Heart left ventricle (tissue), 16 donors: ENCODE measurements at regions of chr5 and their contacts with region 1.

Region 1: DNA sequence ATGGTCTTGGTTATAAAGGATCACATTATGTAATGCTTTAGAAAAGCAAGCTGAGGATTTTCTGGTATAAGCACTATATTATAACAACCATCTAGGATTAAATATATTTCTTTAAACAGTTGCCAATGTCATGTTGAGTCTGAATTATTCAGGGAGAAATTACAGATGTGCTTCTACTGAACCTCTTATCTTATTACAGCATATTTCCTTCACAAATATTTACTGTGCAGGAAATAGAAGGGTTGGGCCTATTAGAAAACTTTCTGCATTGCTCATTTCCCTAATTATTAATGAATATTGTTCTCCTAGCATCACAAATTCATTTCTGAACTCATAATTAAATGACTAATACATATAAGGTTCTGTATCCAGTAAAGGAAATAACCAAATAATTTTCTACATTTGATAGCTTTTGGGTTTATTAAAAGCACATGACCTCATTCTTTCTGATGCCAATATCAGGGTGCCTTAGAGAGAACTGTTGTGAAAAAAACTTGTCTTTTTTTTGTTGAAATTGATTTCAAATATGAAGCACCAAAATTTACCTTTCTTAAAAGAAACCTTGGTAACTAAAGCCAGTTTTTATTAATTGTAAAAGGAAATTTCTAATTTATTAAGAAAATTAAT is 476.8 kb upstream of the PTGER4 start:
- DNase-seq: no peak
- ATAC-seq: peak in 2 of 4 donors; percentile 78 to 83
- H3K4me3 ChIP-seq: no peak overlapping the region
- H3K27ac ChIP-seq: peak overlapping the region in 10 of 12 donors; percentile 23 to 74 (median 52)
- H3K4me1 ChIP-seq: peaks cover 0 to 26% (median 8%) of the 10 kb centered on the region in 12 donors
- H3K27me3 ChIP-seq: no peaks in the 10 kb centered on the region
- CTCF ChIP-seq: no peak
- POLR2A ChIP-seq: no peak

Region 2: GRCh38 chr5:39187831-39188731 is 1014.8 kb before region 1 on chr5:
- intact Hi-C with region 1: no loop called
- DNase-seq: no peak
- ATAC-seq: no peak
- H3K4me3 ChIP-seq: no peak overlapping the region
- H3K27ac ChIP-seq: peak overlapping the region in 1 of 12 donors; percentile 58
- H3K4me1 ChIP-seq: peaks cover 0 to 44% (median 0%) of the 10 kb centered on the region in 12 donors
- H3K27me3 ChIP-seq: peaks cover 0 to 11% (median 0%) of the 10 kb centered on the region in 9 donors
- CTCF ChIP-seq: no peak
- POLR2A ChIP-seq: no peak

Region 3: DNA sequence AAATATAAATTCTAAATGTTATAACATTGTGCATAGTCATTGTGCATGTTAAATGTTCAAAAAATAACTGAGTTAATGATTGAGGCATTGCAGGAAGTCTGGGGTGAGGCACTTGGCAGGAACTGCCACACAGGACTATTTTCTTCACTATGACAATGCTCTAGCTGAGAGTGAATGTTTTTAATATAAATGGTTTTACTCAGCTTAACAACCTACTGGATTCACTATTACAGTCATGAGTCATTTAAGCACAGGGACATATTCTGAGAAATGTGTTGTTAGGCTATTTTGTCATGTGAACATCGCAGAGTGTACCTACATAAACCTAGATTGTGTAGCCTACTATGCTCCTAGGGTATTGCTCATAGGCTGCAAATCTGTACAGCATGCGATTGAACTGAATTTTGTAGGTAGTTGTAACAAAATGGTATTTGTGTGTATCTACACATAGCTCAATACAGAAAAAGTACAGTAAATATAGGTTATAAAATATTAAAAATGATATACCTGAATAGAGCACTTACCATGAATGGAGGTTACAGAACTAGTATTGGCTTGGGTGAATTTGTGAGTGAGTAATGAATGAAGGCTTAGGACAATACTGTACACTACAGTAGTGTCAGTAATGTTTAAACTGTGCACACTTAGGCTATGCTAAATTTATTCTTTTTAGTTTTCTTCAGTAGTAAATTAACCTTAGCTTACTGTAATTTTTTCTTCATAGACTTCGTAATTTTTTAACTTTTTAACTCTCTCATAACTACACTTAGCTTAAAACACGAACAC is 130.7 kb after region 1 on chr5:
- intact Hi-C with region 1: loop called in 1 of 10 experiments (anchors 10 kb)
- DNase-seq: no peak
- ATAC-seq: peak in 2 of 4 donors; percentile 65 to 72
- H3K4me3 ChIP-seq: no peak overlapping the region
- H3K27ac ChIP-seq: peak overlapping the region in 6 of 12 donors; percentile 3 to 61 (median 38)
- H3K4me1 ChIP-seq: peaks cover 0 to 12% (median 2%) of the 10 kb centered on the region in 12 donors
- H3K27me3 ChIP-seq: no peaks in the 10 kb centered on the region
- CTCF ChIP-seq: no peak
- POLR2A ChIP-seq: no peak

Region 4: DNA sequence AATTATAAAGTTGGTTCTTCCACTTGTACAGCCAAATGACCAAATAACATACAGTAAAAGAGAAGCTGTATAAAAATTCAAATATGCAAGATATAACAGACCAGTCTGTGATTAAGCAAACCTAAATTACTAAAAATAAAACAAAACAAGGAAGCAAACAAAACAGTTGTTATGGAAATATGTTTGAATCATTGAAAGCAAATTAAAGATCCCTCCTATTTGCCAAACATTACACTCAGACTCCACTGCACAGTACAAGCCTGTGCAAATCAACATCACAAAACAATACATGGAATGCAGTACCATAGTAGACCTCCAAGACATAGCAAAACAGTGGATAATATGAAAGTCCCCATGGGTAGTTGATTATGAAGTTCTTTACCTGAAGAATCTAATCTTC is 188.7 kb after region 1 on chr5:
- intact Hi-C with region 1: loop called in 1 of 10 experiments (anchors 5 kb)
- DNase-seq: no peak
- ATAC-seq: peak in 2 of 4 donors; percentile 28 to 59
- H3K4me3 ChIP-seq: no peak overlapping the region
- H3K27ac ChIP-seq: peak overlapping the region in 7 of 12 donors; percentile 3 to 40 (median 22)
- H3K4me1 ChIP-seq: peaks cover 0 to 48% (median 7%) of the 10 kb centered on the region in 12 donors
- H3K27me3 ChIP-seq: no peaks in the 10 kb centered on the region
- CTCF ChIP-seq: peak in 1 of 12 donors; percentile 4
- POLR2A ChIP-seq: no peak

Region 5: GRCh38 chr5:40437452-40437861 is 234.5 kb after region 1 on chr5:
- intact Hi-C with region 1: no loop called
- DNase-seq: no peak
- ATAC-seq: peak in 2 of 4 donors; percentile 41 to 54
- H3K4me3 ChIP-seq: no peak overlapping the region
- H3K27ac ChIP-seq: peak overlapping the region in 1 of 12 donors; percentile 78
- H3K4me1 ChIP-seq: peaks cover 0 to 36% (median 0%) of the 10 kb centered on the region in 12 donors
- H3K27me3 ChIP-seq: no peaks in the 10 kb centered on the region
- CTCF ChIP-seq: no peak
- POLR2A ChIP-seq: no peak

Region 6: GRCh38 chr5:40623480-40624420 is 420.8 kb after region 1 on chr5:
- intact Hi-C with region 1: loop called in 1 of 10 experiments (anchors 5 kb)
- DNase-seq: no peak
- ATAC-seq: no peak
- H3K4me3 ChIP-seq: no peak overlapping the region
- H3K27ac ChIP-seq: peak overlapping the region in 6 of 12 donors; percentile 49 to 70 (median 54)
- H3K4me1 ChIP-seq: peaks cover 0 to 42% (median 0%) of the 10 kb centered on the region in 12 donors
- H3K27me3 ChIP-seq: no peaks in the 10 kb centered on the region
- CTCF ChIP-seq: no peak
- POLR2A ChIP-seq: no peak

Region 7: DNA sequence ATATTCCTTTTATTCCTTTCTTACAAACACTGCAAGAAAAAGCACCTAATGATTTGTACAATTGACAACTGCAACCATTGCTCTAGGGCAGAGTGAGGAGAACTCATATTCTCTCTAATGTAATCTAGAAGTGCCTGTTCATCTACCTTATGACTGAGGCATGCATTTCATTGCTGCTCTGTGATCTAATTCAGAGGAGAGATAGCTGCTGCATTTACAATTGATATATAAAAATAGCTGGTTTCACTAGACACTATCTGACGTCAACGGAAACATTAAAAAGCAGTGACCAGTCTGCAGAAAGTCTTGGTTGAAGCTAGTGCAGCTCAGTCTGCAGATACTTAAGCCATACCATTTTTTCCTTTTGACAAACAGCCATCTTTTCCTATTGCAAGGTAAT is 1083.2 kb after region 1 on chr5:
- intact Hi-C with region 1: no loop called
- DNase-seq: no peak
- ATAC-seq: peak; percentile 40 to 90 (median 78)
- H3K4me3 ChIP-seq: no peak overlapping the region
- H3K27ac ChIP-seq: peak overlapping the region in 7 of 12 donors; percentile 20 to 55 (median 42)
- H3K4me1 ChIP-seq: peaks cover 0 to 11% (median 0%) of the 10 kb centered on the region in 12 donors
- H3K27me3 ChIP-seq: no peaks in the 10 kb centered on the region
- CTCF ChIP-seq: no peak
- POLR2A ChIP-seq: no peak